ENCODE measurements at regions of chr1 and their contacts with region 1.

Region 1: DNA sequence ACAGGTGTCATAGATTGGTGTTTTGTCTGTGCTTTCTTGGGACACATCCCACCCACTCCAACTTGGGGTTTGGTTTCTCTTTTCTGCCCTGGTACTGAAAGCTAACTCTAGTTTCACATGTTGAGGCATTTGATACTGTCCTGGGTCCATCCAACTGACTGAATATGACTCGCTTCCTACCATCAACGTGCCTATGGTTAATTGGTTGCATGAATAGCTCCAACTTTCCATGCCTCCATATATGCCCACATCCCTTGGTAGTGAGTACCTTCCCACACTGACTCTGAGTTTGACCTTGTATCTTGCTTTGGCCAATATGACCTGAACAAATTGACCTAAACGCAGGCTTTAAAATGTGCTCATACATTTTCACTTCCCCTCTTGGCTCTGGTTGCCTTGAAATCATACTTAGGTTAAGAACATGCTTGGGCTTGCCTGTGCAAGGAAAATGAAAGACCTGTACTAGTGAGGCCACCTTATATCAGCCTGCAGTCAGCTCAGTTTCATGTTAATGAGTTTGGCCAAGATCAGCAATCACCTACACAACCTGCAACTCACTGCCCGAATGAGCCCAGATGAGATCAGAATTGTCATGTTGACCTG is 81.0 kb upstream of the KCNK2 start:
- DNase-seq: peak; percentile 79
- H3K4me3 Mint-ChIP-seq: peak overlapping the region; percentile 1
- H3K27ac Mint-ChIP-seq: peak overlapping the region; percentile 87
- H3K4me1 Mint-ChIP-seq: peaks cover 41% of the 10 kb centered on the region
- H3K27me3 Mint-ChIP-seq: no peaks in the 10 kb centered on the region
- CTCF ChIP-seq: no peak

Region 2: DNA sequence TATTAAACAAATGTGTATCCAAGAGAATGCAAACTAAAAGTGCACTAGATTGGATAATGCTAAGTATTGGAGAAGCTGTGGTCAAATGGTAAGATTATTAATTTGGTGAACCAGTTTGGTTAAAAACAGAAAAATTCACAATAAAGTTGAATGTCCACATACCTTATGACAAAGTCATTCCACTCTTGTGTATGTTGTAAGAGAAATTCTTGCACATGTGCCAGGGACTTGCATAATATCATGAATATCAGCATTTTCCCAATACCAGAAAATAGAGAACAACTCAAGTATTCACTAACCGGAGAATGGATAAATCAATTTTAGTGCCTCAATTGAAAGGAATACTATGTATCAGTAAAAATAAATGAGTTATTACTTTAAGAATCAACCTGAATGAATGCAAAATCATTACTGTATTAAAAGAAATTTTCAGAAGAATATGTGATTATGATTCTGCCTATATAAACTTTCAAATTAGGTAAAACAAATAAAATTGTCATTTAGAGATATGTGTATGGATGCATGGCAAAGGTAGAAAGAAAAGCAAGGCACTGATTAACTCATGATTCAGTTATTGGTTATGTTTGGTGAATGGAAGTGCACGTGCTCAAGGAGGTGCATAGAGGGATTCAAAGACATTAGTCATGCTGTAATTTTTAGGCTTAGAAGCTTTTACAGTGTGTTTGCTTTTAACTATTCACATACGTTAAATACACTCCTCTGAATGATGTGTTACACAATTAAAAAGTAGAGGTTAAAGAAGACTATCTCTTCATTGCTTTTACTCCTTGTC is 136.4 kb before region 1 on chr1:
- CTCF ChIA-PET with region 1: interaction called, 3 read pairs
- POLR2A ChIA-PET with region 1: interaction called, 11 read pairs
- intact Hi-C with region 1: no loop called
- DNase-seq: peak; percentile 97
- H3K4me3 Mint-ChIP-seq: peak overlapping the region; percentile 17
- H3K27ac Mint-ChIP-seq: peak overlapping the region; percentile 37
- H3K4me1 Mint-ChIP-seq: peaks cover 49% of the 10 kb centered on the region
- H3K27me3 Mint-ChIP-seq: no peaks in the 10 kb centered on the region
- CTCF ChIP-seq: no peak

Region 3: GRCh38 chr1:214957330-214958137 is 44.0 kb before region 1 on chr1:
- CTCF ChIA-PET with region 1: interaction called, 5 read pairs
- POLR2A ChIA-PET with region 1: interaction called, 16 read pairs
- intact Hi-C with region 1: no loop called
- DNase-seq: peak; percentile 98
- H3K4me3 Mint-ChIP-seq: peak overlapping the region; percentile 38
- H3K27ac Mint-ChIP-seq: peak overlapping the region; percentile 93
- H3K4me1 Mint-ChIP-seq: peaks cover 23% of the 10 kb centered on the region
- H3K27me3 Mint-ChIP-seq: no peaks in the 10 kb centered on the region
- CTCF ChIP-seq: no peak

Region 4: DNA sequence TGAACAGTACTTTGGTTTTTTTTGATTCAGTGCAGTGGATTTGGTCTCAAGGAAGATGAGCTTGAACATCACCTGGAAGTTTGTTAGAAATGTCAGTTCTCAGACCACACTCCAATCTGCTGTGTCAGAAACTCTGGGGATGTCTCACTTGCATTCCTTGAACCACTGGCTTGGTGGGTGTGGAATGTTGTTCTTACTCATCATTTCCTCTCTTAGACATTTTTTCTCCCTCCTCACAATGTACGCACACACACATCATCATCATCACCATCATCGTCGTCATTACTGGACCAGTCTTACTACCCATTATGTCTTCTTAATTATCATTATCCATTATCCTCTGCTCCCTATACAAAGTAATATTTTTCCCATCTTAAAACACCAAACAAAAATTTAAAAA is 10.9 kb before region 1 on chr1:
- CTCF ChIA-PET with region 1: interaction called, 12 read pairs
- POLR2A ChIA-PET with region 1: interaction called, 5 read pairs
- intact Hi-C with region 1: no loop called
- DNase-seq: peak; percentile 70
- H3K4me3 Mint-ChIP-seq: no peak overlapping the region
- H3K27ac Mint-ChIP-seq: peak overlapping the region; percentile 2
- H3K4me1 Mint-ChIP-seq: peaks cover 20% of the 10 kb centered on the region
- H3K27me3 Mint-ChIP-seq: no peaks in the 10 kb centered on the region
- CTCF ChIP-seq: no peak